ENCODE measurements at regions of chr14 and their contacts with region 1.

Region 1: DNA sequence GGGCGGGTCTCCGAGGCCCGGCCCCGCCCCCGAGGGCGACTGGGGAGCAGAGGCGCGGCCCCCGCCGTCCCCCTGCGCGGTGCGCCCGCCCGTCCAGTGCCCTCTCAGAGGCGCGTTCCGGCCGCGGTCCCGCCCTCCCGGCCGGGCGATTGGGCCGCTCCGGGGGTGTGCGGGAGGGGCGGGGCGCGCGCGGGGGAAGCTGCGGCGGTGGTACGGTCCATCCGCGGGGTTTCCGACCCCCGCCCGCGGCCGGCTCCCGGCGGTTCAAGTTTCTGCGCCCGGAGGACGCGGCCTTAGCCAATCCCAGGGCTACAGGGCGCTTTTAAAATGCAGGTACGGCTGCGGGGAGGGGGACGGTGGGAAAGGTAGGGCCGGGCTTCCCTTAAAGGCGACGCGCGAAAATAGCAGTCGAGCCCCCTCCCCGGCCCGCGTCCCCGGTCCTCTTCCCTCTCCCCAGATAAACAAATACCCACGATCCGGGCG is 317 bp upstream of the CCDC85C start:
- DNase-seq: peak; percentile 95
- H3K4me3 Mint-ChIP-seq: peak overlapping the region; percentile 86
- H3K27ac Mint-ChIP-seq: peak overlapping the region; percentile 87
- H3K4me1 Mint-ChIP-seq: peaks cover 25% of the 10 kb centered on the region
- H3K27me3 Mint-ChIP-seq: peaks cover 5% of the 10 kb centered on the region

Region 2: GRCh38 chr14:99480917-99481744 is 123.2 kb before region 1 on chr14 and contains the start of gene CCNK:
- CTCF ChIA-PET with region 1: no interaction called
- POLR2A ChIA-PET with region 1: interaction called, 14 read pairs
- DNase-seq: peak; percentile 100
- H3K4me3 Mint-ChIP-seq: peak within 1 kb of the TSS; percentile 96
- H3K27ac Mint-ChIP-seq: peak within 1 kb of the TSS; percentile 94
- H3K4me1 Mint-ChIP-seq: peaks cover 46% of the 10 kb centered on the region
- H3K27me3 Mint-ChIP-seq: no peaks in the 10 kb centered on the region
- total RNA-seq, gene CCNK: 79.2 to 83.7 TPM

Region 3: DNA sequence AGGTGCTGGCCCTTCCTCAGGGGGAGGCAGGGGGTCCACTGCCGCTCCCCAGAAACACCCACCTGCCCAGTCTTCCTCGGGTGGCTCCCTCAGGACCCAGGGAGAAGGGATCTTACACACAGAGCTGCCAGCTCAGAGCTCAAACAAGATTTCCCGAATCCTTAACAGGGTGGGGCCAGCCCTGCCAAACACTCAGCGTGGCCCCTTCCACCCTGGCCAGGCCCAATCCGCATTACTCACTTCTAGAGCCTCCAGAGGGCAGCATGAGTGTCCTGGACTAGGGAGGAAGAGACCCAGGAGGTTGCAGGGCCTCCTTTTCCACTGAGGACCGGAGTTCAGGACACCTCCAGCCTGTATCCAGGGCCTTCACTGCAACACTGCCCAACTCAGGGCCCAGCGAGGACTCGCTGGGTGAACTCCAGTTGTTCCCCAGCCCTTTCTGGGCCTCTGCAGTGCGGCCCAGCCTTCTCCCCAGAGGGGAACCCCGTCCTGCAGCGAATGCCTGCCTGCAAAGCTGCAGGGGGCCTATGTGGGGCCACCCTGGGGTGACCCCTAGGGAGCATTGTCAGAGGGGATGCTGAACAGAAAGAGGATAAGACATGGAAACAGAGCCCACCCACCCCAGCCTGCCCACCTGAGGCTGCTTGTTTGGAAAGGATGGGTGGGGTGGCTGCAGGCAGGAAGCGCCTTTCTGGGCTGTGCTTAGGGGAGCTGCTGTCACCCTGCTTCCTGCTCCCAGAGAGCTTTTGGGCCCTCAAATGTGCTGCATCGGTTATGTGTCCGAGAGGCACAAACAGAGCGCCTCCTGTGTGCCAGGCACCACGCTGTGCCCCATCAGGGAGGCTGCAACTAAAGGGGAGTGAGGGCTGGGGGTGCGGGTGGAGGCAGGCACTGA is 79.3 kb before region 1 on chr14:
- CTCF ChIA-PET with region 1: no interaction called
- POLR2A ChIA-PET with region 1: interaction called, 10 read pairs
- DNase-seq: peak; percentile 44
- H3K4me3 Mint-ChIP-seq: no peak overlapping the region
- H3K27ac Mint-ChIP-seq: peak overlapping the region; percentile 89
- H3K4me1 Mint-ChIP-seq: peaks cover 10% of the 10 kb centered on the region
- H3K27me3 Mint-ChIP-seq: no peaks in the 10 kb centered on the region

Region 4: DNA sequence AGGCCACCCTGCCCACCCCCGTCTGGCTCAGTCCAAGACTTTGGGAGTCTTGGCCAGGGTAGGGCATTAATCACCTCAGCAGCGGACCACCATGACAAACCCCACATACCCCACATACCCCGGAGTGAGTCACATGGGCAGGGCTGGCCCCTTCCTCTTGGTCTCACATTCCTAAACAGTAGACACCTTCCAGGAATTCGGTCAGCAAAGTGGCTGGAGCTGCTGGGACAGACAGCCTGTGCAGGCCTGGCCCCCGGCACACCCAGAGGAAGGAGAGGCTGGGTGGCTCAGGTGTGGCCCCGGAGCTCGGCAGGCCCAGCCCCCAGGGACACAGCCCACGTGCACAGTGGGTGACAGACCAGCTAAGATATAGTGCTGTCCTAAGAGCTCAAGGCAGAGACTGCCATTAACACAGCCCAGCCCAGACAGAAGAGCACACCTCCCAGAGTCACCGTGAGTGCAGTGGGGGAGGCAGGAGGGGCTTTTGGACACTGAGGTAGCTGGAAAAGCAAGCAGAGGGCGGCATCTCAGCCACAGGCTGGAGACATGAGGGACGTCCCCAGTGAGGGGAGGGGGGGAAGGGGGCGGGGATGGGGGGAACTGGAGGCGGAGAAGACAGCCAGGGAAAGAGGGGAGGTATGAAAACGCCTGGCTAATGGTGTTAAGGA is 24.3 kb before region 1 on chr14:
- CTCF ChIA-PET with region 1: no interaction called
- POLR2A ChIA-PET with region 1: no interaction called
- DNase-seq: no peak
- H3K4me3 Mint-ChIP-seq: no peak overlapping the region
- H3K27ac Mint-ChIP-seq: no peak overlapping the region
- H3K4me1 Mint-ChIP-seq: no peaks in the 10 kb centered on the region
- H3K27me3 Mint-ChIP-seq: no peaks in the 10 kb centered on the region

Region 5: GRCh38 chr14:99615497-99616157 is 11.3 kb after region 1 on chr14:
- CTCF ChIA-PET with region 1: no interaction called
- POLR2A ChIA-PET with region 1: interaction called, 11 read pairs
- DNase-seq: no peak
- H3K4me3 Mint-ChIP-seq: no peak overlapping the region
- H3K27ac Mint-ChIP-seq: no peak overlapping the region
- H3K4me1 Mint-ChIP-seq: peaks cover 3% of the 10 kb centered on the region
- H3K27me3 Mint-ChIP-seq: peaks cover 21% of the 10 kb centered on the region

Measured in activated CD4-positive, alpha-beta memory T cell treated with anti-CD3 and anti-CD28 coated beads, Interleukin-2, amount 10 ng/mL, durations not matched to agents 7 days and 5 days (primary cell).